CD4-positive, alpha-beta memory T cell (primary cell): ENCODE measurements at regions of chr16 and their contacts with region 1.

Region 1: DNA sequence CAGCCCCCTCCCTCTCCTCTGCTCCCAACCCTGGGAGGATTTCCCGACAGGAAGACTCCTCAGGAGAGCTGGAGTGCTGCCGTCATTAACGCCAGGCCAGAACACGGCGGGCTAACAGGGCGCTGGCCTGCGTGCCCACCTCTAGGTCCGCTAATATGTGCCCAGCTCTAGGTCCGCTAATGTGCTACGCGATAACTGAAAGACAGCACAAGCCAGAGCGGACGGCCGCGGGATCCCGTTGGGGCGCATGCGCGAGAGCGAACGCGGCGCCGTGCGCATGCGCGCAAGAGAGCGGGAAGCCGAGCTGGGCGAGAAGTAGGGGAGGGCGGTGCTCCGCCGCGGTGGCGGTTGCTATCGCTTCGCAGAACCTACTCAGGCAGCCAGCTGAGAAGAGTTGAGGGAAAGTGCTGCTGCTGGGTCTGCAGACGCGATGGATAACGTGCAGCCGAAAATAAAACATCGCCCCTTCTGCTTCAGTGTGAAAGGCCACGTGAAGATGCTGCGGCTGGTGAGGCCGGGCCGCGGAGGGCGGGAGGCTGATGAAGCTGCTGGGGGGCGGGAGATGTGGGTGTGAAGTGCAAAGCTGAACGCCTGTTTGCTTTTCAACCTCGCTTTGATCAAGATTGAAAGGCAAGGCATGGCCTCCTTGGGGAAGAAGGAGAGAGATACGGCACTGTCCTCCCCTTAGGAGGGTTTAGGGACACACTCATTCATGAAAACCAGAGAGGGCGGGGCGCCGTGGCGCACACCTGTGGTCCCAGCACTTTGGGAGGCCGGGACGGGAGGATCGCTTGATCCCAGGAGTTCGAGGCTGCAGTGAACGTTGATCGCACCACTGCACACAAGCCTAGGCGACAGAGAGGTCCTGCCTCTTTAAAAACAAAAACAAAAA is at the start of gene CKLF:
- DNase-seq: peak; percentile 89 to 94 (median 92)
- H3K4me3 ChIP-seq: peak within 1 kb of the TSS; percentile 19 to 76
- H3K4me3 Mint-ChIP-seq: peak within 1 kb of the TSS; percentile 94 to 99 (median 97)
- H3K27ac ChIP-seq: peak within 1 kb of the TSS; percentile 72
- H3K27ac Mint-ChIP-seq: peak within 1 kb of the TSS; percentile 94 to 98 (median 96)
- H3K4me1 ChIP-seq: peaks cover 89% of the 10 kb centered on the region
- H3K4me1 Mint-ChIP-seq: peaks cover 63 to 88% (median 74%) of the 10 kb centered on the region in 4 donors
- H3K27me3 ChIP-seq: no peaks in the 10 kb centered on the region
- H3K27me3 Mint-ChIP-seq: no peaks in the 10 kb centered on the region
- total RNA-seq, gene CKLF: 71.0 to 76.6 TPM

Region 2: GRCh38 chr16:66344533-66345145 is 207.9 kb before region 1 on chr16:
- CTCF ChIA-PET with region 1: no interaction called
- POLR2A ChIA-PET with region 1: no interaction called
- intact Hi-C with region 1: no loop called
- DNase-seq: peak in 4 of 5 donors; percentile 13 to 24 (median 19)
- H3K4me3 ChIP-seq: no peak overlapping the region
- H3K4me3 Mint-ChIP-seq: no peak overlapping the region
- H3K27ac ChIP-seq: no peak overlapping the region
- H3K27ac Mint-ChIP-seq: no peak overlapping the region
- H3K4me1 ChIP-seq: no peaks in the 10 kb centered on the region
- H3K4me1 Mint-ChIP-seq: no peaks in the 10 kb centered on the region
- H3K27me3 ChIP-seq: no peaks in the 10 kb centered on the region
- H3K27me3 Mint-ChIP-seq: peaks cover 25 to 41% of the 10 kb centered on the region in 2 donors

Region 3: GRCh38 chr16:66406534-66407221 is 145.9 kb before region 1 on chr16:
- CTCF ChIA-PET with region 1: interaction called, 12 read pairs
- POLR2A ChIA-PET with region 1: interaction called, 15 read pairs
- intact Hi-C with region 1: loop called (anchors 2 kb)
- DNase-seq: peak; percentile 76 to 85 (median 81)
- H3K4me3 ChIP-seq: peak overlapping the region; percentile 57 to 62
- H3K4me3 Mint-ChIP-seq: peak overlapping the region; percentile 86 to 94 (median 89)
- H3K27ac ChIP-seq: no peak overlapping the region
- H3K27ac Mint-ChIP-seq: peak overlapping the region in 6 of 7 donors; percentile 64 to 76 (median 68)
- H3K4me1 ChIP-seq: peaks cover 32% of the 10 kb centered on the region
- H3K4me1 Mint-ChIP-seq: peaks cover 17 to 37% (median 28%) of the 10 kb centered on the region in 4 donors
- H3K27me3 ChIP-seq: no peaks in the 10 kb centered on the region
- H3K27me3 Mint-ChIP-seq: peaks cover 6% of the 10 kb centered on the region in 2 donors

Region 4: GRCh38 chr16:66483689-66484481 is 68.6 kb before region 1 on chr16:
- CTCF ChIA-PET with region 1: interaction called, 10 read pairs
- POLR2A ChIA-PET with region 1: interaction called, 8 read pairs
- intact Hi-C with region 1: no loop called
- DNase-seq: peak; percentile 60 to 69 (median 64)
- H3K4me3 ChIP-seq: no peak overlapping the region
- H3K4me3 Mint-ChIP-seq: no peak overlapping the region
- H3K27ac ChIP-seq: no peak overlapping the region
- H3K27ac Mint-ChIP-seq: peak overlapping the region in 5 of 7 donors; percentile 27 to 68 (median 61)
- H3K4me1 ChIP-seq: peaks cover 16% of the 10 kb centered on the region
- H3K4me1 Mint-ChIP-seq: peaks cover 10 to 24% (median 13%) of the 10 kb centered on the region in 4 donors
- H3K27me3 ChIP-seq: no peaks in the 10 kb centered on the region
- H3K27me3 Mint-ChIP-seq: no peaks in the 10 kb centered on the region

Region 5: DNA sequence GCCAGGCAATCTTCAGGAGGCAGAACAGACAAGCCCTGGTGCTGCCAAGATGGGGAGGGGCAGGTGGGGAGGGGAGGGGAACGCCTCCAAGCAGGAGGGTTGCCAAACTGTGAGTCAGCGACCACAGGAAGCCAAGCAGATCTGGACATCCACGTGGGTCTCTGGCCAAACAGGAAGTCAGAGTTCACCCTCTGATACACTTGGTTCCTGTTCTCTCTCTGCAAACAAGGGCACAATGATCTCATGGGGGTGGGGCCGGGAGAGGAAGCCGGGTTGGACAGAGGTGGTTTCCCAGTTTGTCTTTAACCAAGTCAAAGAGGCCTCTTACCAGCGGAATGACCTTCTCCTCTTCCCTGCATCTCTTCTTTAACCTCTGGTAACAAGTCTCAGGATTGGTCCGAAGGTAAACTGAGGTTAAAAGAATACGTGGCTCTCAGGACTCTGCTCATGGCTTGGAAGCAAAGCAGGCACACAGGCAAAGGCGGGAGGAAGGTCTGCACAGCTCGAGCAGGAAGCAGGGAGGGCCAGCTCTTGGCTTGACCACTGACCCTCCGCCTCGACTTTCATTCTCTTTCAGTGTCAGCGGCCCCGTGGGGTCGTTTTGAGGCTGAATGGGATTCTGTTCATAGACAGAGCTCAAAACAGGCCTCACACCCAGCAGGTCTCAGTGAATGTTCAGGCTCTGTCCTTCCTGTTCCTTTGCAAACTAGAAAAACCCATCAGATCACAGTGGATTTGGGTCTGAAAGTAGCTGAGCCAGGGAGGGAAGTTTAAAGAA is 35.5 kb before region 1 on chr16:
- CTCF ChIA-PET with region 1: interaction called, 72 read pairs
- POLR2A ChIA-PET with region 1: interaction called, 440 read pairs
- intact Hi-C with region 1: no loop called
- DNase-seq: peak; percentile 63 to 96 (median 67)
- H3K4me3 ChIP-seq: no peak overlapping the region
- H3K4me3 Mint-ChIP-seq: peak overlapping the region in 7 of 8 donors; percentile 66 to 83 (median 74)
- H3K27ac ChIP-seq: peak overlapping the region; percentile 76
- H3K27ac Mint-ChIP-seq: peak overlapping the region; percentile 96 to 99 (median 98)
- H3K4me1 ChIP-seq: peaks cover 73% of the 10 kb centered on the region
- H3K4me1 Mint-ChIP-seq: peaks cover 52 to 94% (median 71%) of the 10 kb centered on the region in 4 donors
- H3K27me3 ChIP-seq: no peaks in the 10 kb centered on the region
- H3K27me3 Mint-ChIP-seq: no peaks in the 10 kb centered on the region

Region 6: DNA sequence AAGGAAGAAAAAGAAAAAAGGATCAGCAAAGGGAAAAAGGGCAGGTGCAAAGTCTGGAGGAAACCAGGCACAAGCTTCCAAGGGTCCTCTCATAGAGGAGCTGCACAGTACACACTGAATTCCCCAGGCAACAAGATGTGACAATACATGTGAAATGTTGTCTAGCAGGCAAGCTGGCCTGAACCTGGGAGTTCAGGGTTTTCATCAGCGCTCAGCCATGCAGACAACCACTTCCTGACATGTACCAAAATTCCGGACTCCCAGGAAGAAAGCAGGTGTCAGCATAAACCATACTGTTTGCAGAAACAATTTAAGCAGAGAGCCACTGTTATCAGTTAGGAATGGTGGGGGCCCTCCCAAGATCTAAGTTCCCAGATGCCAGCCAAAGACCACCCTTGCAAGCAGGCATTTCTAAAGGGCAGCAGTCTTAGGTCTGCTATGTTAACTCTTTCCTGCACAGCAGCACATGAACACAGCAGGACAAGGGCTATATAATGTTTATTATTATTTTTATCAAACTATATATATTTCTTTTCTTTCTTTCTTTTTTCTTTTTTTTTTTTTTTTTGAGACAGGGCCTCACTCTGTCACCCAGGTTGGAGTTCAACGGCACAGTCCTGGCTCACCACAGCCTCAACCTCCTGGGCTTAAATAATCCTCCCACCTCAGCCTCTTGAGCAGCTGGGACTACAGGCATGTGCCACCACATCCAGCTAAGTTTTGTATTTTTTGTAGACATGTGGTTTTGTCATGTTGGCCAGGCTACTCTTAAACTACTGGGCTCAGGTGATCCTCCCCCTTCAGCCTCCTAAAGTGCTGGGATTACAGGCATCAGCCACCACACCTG is 12.7 kb before region 1 on chr16:
- CTCF ChIA-PET with region 1: interaction called, 5 read pairs
- POLR2A ChIA-PET with region 1: interaction called, 440 read pairs
- intact Hi-C with region 1: loop called (anchors 2 kb)
- DNase-seq: no peak
- H3K4me3 ChIP-seq: no peak overlapping the region
- H3K4me3 Mint-ChIP-seq: peak overlapping the region in 7 of 8 donors; percentile 5 to 70 (median 40)
- H3K27ac ChIP-seq: no peak overlapping the region
- H3K27ac Mint-ChIP-seq: peak overlapping the region; percentile 25 to 68 (median 62)
- H3K4me1 ChIP-seq: peaks cover 19% of the 10 kb centered on the region
- H3K4me1 Mint-ChIP-seq: peaks cover 9 to 46% (median 20%) of the 10 kb centered on the region in 4 donors
- H3K27me3 ChIP-seq: no peaks in the 10 kb centered on the region
- H3K27me3 Mint-ChIP-seq: no peaks in the 10 kb centered on the region

Region 7: DNA sequence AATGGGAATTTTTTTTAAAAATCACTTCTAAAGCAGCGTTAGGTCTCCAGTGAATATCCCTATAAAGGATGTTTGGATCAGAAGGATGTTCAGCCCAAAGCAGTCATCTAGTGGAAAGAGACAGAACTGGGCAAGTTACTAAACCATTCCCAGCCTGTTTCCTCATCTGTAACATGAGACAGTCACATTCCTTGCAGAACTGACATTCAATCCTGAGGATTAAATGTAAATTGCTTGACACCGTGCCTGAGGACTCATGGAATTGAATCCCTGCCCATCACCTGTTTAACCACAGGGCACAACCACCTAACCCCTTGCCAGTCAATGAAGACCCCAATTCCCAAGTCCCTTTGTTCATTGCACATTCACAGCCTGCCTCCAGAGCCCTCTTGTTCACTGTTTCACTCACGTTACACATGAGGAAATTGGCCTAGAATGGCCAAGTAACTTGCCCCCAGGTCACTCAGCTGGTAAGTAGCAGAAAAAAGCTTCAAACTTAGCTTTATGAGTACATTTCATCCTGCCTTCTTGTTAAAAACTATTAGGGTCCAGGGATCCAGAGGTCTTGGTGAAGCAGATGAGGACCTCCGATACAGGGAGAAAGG is 28.2 kb after region 1 on chr16:
- CTCF ChIA-PET with region 1: interaction called, 4 read pairs
- POLR2A ChIA-PET with region 1: interaction called, 13 read pairs
- intact Hi-C with region 1: loop called (anchors 5 kb)
- DNase-seq: no peak
- H3K4me3 ChIP-seq: no peak overlapping the region
- H3K4me3 Mint-ChIP-seq: peak overlapping the region in 2 of 8 donors; percentile 1 to 4
- H3K27ac ChIP-seq: no peak overlapping the region
- H3K27ac Mint-ChIP-seq: no peak overlapping the region
- H3K4me1 ChIP-seq: peaks cover 5% of the 10 kb centered on the region
- H3K4me1 Mint-ChIP-seq: peaks cover 4 to 17% (median 9%) of the 10 kb centered on the region in 4 donors
- H3K27me3 ChIP-seq: peaks cover 3% of the 10 kb centered on the region
- H3K27me3 Mint-ChIP-seq: peaks cover 2 to 6% of the 10 kb centered on the region in 2 donors

Region 8: DNA sequence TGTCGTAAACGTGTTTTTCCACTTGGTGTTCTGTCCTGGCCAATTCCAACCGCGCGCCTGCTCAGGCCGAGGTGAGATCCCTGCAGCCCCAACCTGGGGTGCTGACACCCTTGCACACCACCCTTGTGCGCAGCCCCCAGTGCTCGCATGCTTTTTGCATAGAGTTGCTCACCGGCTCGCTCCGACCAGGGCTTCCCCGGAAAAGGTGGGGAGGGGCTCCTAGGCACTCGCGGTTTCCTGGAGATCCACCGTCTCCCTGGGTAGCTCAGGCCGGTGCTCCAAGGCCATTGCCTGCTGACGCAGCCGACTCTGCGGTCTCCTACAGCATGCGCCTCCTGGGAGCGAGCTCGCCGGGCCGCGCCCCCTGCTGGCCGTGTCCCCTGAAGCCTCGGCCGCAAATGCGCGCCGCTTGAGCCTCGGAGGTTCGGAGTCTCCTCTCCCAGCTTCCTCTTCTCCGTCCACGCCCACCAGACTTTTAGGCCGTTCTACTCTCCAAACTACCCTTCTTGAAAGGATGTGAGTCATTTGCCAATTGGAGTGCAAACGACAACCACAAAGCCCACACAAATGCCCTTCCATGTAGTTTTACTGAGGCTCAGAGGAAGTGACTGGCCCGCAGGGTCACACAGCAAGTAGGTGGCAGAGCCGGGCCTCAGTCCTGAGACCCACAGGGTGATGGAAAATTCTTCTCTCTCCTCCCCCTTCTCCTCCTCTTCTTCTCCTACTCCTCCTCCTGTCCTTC is 320.6 kb after region 1 on chr16:
- CTCF ChIA-PET with region 1: no interaction called
- POLR2A ChIA-PET with region 1: interaction called, 3 read pairs
- intact Hi-C with region 1: loop called (anchors 2 kb)
- DNase-seq: peak; percentile 80 to 94 (median 82)
- H3K4me3 ChIP-seq: peak overlapping the region in 1 of 2 donors; percentile 52
- H3K4me3 Mint-ChIP-seq: peak overlapping the region; percentile 61 to 90 (median 82)
- H3K27ac ChIP-seq: peak overlapping the region; percentile 36
- H3K27ac Mint-ChIP-seq: peak overlapping the region; percentile 75 to 95 (median 86)
- H3K4me1 ChIP-seq: peaks cover 22% of the 10 kb centered on the region
- H3K4me1 Mint-ChIP-seq: peaks cover 18 to 37% (median 23%) of the 10 kb centered on the region in 4 donors
- H3K27me3 ChIP-seq: no peaks in the 10 kb centered on the region
- H3K27me3 Mint-ChIP-seq: no peaks in the 10 kb centered on the region